Left ventricle myocardium superior (tissue), 1 donor: ENCODE measurements at regions of chrX and their contacts with region 1.

Region 1: DNA sequence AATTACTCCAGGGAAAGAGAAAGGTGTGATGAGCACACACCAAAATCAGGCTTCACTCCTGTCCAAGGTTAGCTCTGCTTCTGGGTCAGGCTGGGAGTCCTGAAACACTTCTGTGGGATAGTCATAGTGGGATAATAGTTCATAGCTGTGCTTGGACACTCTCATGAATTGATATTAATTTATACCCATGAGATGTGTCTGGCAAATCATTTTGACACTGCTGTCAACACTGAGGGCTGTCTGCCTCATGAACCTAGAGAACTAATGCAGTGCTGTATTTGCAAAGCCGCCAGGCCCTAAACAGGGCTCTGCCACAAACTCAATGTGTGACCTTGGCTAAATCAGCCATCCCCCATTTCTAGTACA is 24.5 kb upstream of the PGRMC1 start:
- DNase-seq: peak; percentile 36
- ATAC-seq: peak; percentile 98

Region 2: DNA sequence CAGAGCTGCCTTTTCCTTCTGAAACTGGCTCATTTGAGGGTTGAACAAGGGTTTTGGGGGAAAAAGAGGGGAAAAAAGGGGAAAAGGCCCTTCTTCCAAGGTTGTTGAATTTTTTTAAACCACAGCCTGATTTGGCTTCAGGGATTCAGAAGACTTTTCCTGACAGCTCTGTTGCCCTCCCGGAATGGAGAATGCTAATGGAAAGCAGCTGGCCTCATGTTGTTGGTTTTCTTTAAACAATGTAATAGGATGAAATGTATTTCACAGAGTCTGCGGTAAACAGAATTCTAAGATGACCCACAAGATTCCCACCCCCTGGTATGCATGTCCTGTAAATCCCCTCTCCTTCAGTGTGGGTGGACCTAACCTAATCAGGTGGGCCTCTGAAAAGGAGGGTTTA is 80.7 kb before region 1 on chrX:
- intact Hi-C with region 1: loop called (anchors 10 kb)
- DNase-seq: no peak
- ATAC-seq: no peak